H1 (cell line): ENCODE measurements at regions of chr6 and their contacts with region 1.

Region 1: GRCh38 chr6:116975600-116975999 is 98.6 kb downstream of the RFX6 start:
- DNase-seq: no peak
- H3K4me3 ChIP-seq: no peak overlapping the region
- H3K27ac ChIP-seq: no peak overlapping the region
- H3K4me1 ChIP-seq: no peaks in the 10 kb centered on the region
- H3K27me3 ChIP-seq: peaks cover 0 to 1% (median 0%) of the 10 kb centered on the region in 4 experiments; a peak in 1 of 7 replicates
- CTCF ChIP-seq: no peak
- EP300 ChIP-seq: no peak
- POLR2A ChIP-seq: no peak
- RAD21 ChIP-seq: no peak

Region 2: GRCh38 chr6:116680975-116681808 is 294.4 kb before region 1 on chr6 and contains the start of gene KPNA5:
- CTCF ChIA-PET with region 1: no interaction called
- POLR2A ChIA-PET with region 1: no interaction called
- DNase-seq: peak; percentile 67 to 89
- H3K4me3 ChIP-seq: peak within 1 kb of the TSS; percentile 81 to 93 (median 88)
- H3K27ac ChIP-seq: peak within 1 kb of the TSS; percentile 91
- H3K4me1 ChIP-seq: peaks cover 0 to 2% (median 0%) of the 10 kb centered on the region in 4 experiments; a peak in 1 of 7 replicates
- H3K27me3 ChIP-seq: no peaks in the 10 kb centered on the region
- CTCF ChIP-seq: no peak
- EP300 ChIP-seq: peak in 1 of 2 experiments; percentile 64; a peak in 1 of 3 replicates
- POLR2A ChIP-seq: peak; percentile 63 to 94
- RAD21 ChIP-seq: no peak
- total RNA-seq, gene KPNA5: 9.7 and 11.7 TPM in 2 replicates

Region 3: DNA sequence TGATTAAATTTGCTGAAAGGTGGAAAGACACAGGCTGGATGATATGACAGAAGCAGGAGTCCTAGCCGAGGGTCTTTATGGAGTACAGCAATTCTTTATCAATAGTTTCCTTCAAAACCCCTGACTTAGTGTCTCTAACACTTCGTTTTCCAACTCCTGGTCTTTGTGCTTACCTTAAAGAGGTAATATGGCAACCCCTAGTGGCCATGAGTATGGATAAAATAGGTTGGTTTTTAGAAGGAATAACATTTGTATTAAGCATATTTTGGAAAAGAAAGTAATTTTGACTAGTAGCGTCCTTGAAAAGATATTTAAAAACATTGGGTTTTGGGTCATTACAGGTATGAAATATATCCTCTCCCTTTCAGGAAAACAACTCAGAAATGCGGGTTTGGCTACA is 341.7 kb after region 1 on chr6:
- CTCF ChIA-PET with region 1: interaction called, 10 read pairs
- POLR2A ChIA-PET with region 1: no interaction called
- DNase-seq: no peak
- H3K4me3 ChIP-seq: no peak overlapping the region
- H3K27ac ChIP-seq: no peak overlapping the region
- H3K4me1 ChIP-seq: peaks cover 0 to 3% (median 0%) of the 10 kb centered on the region in 4 experiments; a peak in 1 of 7 replicates
- H3K27me3 ChIP-seq: no peaks in the 10 kb centered on the region
- CTCF ChIP-seq: peak in 2 of 3 experiments; percentile 28 to 57; a peak in 2 of 4 replicates
- EP300 ChIP-seq: no peak
- POLR2A ChIP-seq: no peak
- RAD21 ChIP-seq: peak; percentile 70 to 75